MCF 10A (cell line): ENCODE measurements at regions of chr3 and their contacts with region 1.

Region 1: GRCh38 chr3:189937307-189938124 is 183.2 kb downstream of the P3H2 start:
- DNase-seq: peak; percentile 100
- H3K4me3 Mint-ChIP-seq: peak overlapping the region; percentile 33
- H3K27ac Mint-ChIP-seq: peak overlapping the region; percentile 95
- H3K4me1 Mint-ChIP-seq: peaks cover 39% of the 10 kb centered on the region
- H3K27me3 Mint-ChIP-seq: no peaks in the 10 kb centered on the region
- CTCF ChIP-seq: no peak

Region 2: GRCh38 chr3:189563866-189564563 is 373.5 kb before region 1 on chr3:
- CTCF ChIA-PET with region 1: interaction called, 3 read pairs
- POLR2A ChIA-PET with region 1: no interaction called
- intact Hi-C with region 1: loop called (anchors 1 kb)
- DNase-seq: peak; percentile 92
- H3K4me3 Mint-ChIP-seq: no peak overlapping the region
- H3K27ac Mint-ChIP-seq: peak overlapping the region; percentile 69
- H3K4me1 Mint-ChIP-seq: peaks cover 26% of the 10 kb centered on the region
- H3K27me3 Mint-ChIP-seq: no peaks in the 10 kb centered on the region
- CTCF ChIP-seq: no peak

Region 3: GRCh38 chr3:189824629-189825312 is 112.7 kb before region 1 on chr3:
- CTCF ChIA-PET with region 1: no interaction called
- POLR2A ChIA-PET with region 1: interaction called, 34 read pairs
- intact Hi-C with region 1: no loop called
- DNase-seq: peak; percentile 96
- H3K4me3 Mint-ChIP-seq: peak overlapping the region; percentile 42
- H3K27ac Mint-ChIP-seq: peak overlapping the region; percentile 83
- H3K4me1 Mint-ChIP-seq: peaks cover 31% of the 10 kb centered on the region
- H3K27me3 Mint-ChIP-seq: no peaks in the 10 kb centered on the region
- CTCF ChIP-seq: no peak

Region 4: GRCh38 chr3:189862390-189863023 is 75.0 kb before region 1 on chr3:
- CTCF ChIA-PET with region 1: no interaction called
- POLR2A ChIA-PET with region 1: interaction called, 21 read pairs
- intact Hi-C with region 1: loop called (anchors 1 kb)
- DNase-seq: peak; percentile 95
- H3K4me3 Mint-ChIP-seq: peak overlapping the region; percentile 35
- H3K27ac Mint-ChIP-seq: peak overlapping the region; percentile 96
- H3K4me1 Mint-ChIP-seq: peaks cover 21% of the 10 kb centered on the region
- H3K27me3 Mint-ChIP-seq: no peaks in the 10 kb centered on the region
- CTCF ChIP-seq: no peak

Region 5: GRCh38 chr3:189908646-189909045 is 28.9 kb before region 1 on chr3:
- CTCF ChIA-PET with region 1: no interaction called
- POLR2A ChIA-PET with region 1: interaction called, 66 read pairs
- intact Hi-C with region 1: no loop called
- DNase-seq: peak; percentile 86
- H3K4me3 Mint-ChIP-seq: no peak overlapping the region
- H3K27ac Mint-ChIP-seq: peak overlapping the region; percentile 80
- H3K4me1 Mint-ChIP-seq: peaks cover 33% of the 10 kb centered on the region
- H3K27me3 Mint-ChIP-seq: no peaks in the 10 kb centered on the region
- CTCF ChIP-seq: no peak

Region 6: DNA sequence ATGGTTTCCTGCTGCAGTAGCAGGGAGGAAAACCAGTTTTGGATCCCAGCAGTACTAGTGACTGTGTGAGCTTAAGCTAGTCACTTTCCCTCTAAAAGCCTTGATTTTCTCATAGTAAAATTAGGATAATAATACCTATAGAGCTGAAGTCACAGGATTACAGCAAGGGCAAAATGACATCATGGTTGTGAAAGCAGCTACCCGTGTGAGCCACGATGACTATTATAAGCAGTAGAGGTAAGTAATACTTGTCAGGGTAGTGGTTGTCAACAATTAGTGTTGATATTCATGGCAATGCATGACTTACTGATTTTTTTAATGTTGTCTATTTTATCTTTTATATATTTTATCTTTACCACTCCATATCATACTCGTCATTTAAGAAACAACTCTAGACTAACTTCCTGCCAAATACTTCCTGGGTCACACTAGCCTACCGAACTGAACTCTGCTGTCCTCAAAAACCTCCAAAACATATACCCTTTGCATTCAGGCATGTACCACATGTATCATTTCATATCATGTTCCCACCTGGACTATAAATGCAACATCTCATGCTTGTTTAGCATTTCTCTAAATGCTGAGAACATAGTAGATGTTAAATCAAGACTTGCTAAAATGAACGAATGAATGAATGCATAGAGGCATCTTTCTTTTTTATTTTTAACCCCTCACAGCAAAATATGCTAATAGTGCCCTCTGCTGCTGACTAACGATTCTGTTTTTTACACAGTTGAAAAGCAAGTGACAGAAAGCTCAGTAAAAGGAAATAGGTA is 10.6 kb after region 1 on chr3:
- CTCF ChIA-PET with region 1: interaction called, 9 read pairs
- POLR2A ChIA-PET with region 1: interaction called, 11 read pairs
- intact Hi-C with region 1: no loop called
- DNase-seq: peak; percentile 73
- H3K4me3 Mint-ChIP-seq: no peak overlapping the region
- H3K27ac Mint-ChIP-seq: peak overlapping the region; percentile 74
- H3K4me1 Mint-ChIP-seq: peaks cover 26% of the 10 kb centered on the region
- H3K27me3 Mint-ChIP-seq: no peaks in the 10 kb centered on the region
- CTCF ChIP-seq: peak; percentile 76

Region 7: DNA sequence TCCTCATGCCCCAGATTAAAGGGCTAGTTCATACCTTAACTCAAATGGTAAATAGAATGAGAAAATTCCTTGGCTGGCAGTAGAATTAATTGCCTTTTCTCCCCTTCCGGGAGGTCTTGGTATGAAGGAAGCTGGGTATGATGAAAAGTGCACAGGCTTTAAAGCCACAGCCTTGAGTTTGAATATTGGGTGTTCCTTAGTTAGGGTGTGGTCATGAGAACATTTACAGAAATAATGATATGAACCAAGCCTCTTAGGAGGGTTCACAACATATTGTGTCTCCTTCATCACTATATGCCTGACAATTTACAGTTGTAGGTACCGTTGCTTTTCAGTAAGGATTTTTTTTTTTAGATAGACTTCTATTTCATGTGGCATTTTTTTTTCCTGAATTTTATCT is 1571.6 kb after region 1 on chr3:
- CTCF ChIA-PET with region 1: no interaction called
- POLR2A ChIA-PET with region 1: no interaction called
- intact Hi-C with region 1: no loop called
- DNase-seq: no peak
- H3K4me3 Mint-ChIP-seq: no peak overlapping the region
- H3K27ac Mint-ChIP-seq: no peak overlapping the region
- H3K4me1 Mint-ChIP-seq: no peaks in the 10 kb centered on the region
- H3K27me3 Mint-ChIP-seq: no peaks in the 10 kb centered on the region
- CTCF ChIP-seq: no peak